Naive thymus-derived CD4-positive, alpha-beta T cell (primary cell): ENCODE measurements at regions of chrX and their contacts with region 1.

Region 1: GRCh38 chrX:107826238-107827029 is 768 bp downstream of the MID2 start:
- DNase-seq: peak in 8 of 9 donors; percentile 9 to 53 (median 46)
- ATAC-seq: peak; percentile 77
- H3K4me3 ChIP-seq: peak overlapping the region; percentile 57
- H3K4me3 Mint-ChIP-seq: peak overlapping the region; percentile 78 to 92 (median 89)
- H3K27ac ChIP-seq: peak overlapping the region; percentile 80
- H3K27ac Mint-ChIP-seq: peak overlapping the region; percentile 44 to 95 (median 92)
- H3K4me1 ChIP-seq: peaks cover 0 to 7% of the 10 kb centered on the region in 2 donors
- H3K4me1 Mint-ChIP-seq: peaks cover 11 to 65% (median 43%) of the 10 kb centered on the region in 7 donors
- H3K27me3 ChIP-seq: no peaks in the 10 kb centered on the region
- H3K27me3 Mint-ChIP-seq: peaks cover 0 to 20% (median 0%) of the 10 kb centered on the region in 5 donors

Region 2: GRCh38 chrX:107654872-107655761 is 171.3 kb before region 1 on chrX:
- CTCF ChIA-PET with region 1: no interaction called
- POLR2A ChIA-PET with region 1: no interaction called
- intact Hi-C with region 1: loop called in 1 of 2 experiments (anchors 5 kb)
- DNase-seq: peak; percentile 49 to 76 (median 60)
- ATAC-seq: peak; percentile 94
- H3K4me3 ChIP-seq: no peak overlapping the region
- H3K4me3 Mint-ChIP-seq: no peak overlapping the region
- H3K27ac ChIP-seq: no peak overlapping the region
- H3K27ac Mint-ChIP-seq: peak overlapping the region in 7 of 9 donors; percentile 1 to 89 (median 72)
- H3K4me1 ChIP-seq: peaks cover 0 to 6% of the 10 kb centered on the region in 2 donors
- H3K4me1 Mint-ChIP-seq: peaks cover 6 to 30% (median 18%) of the 10 kb centered on the region in 7 donors
- H3K27me3 ChIP-seq: no peaks in the 10 kb centered on the region
- H3K27me3 Mint-ChIP-seq: no peaks in the 10 kb centered on the region

Region 3: DNA sequence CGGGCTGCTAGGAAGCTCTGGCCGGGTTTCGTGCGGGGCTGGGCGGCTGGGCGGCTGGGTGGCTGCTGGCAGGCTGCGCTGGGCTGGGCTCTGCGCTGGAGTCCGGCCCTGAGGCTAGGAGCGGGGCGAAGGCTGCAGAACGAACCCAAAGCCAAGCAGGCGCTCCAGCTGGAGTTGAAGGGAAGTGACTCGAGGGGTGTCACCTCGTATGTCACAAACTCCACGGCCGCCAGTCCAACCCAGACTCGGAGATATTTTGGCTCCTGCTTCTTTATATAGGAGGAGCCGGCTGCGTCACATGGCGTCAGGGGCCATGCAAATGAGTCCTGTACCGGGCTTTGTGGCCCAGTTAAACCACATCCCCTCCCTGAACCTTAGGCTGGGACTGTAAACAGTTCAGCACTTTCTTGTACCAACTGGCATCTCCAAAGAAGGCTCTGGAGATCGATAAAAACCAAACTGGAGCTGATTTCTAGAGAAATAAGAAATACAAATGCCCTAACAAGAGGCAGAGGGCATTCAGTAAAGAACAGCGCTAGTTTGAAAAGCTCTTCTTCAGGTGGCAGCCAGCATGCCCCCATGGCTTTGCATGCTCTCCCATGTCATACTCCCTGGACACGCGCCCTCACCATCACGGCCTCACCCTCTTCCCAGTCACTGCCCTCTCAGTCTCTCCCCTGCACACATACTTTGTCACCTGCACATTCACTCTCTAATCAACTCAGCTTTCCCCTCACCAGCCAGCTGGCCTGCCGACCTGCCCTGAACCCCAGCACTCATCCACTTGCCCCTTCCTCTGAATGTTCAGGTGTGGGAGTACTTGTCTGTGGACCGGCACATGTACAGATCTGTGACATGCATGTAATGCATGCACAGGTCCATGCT is 109.4 kb before region 1 on chrX:
- CTCF ChIA-PET with region 1: no interaction called
- POLR2A ChIA-PET with region 1: no interaction called
- intact Hi-C with region 1: loop called in 1 of 2 experiments (anchors 1 kb)
- DNase-seq: peak; percentile 77 to 96 (median 91)
- ATAC-seq: peak; percentile 68
- H3K4me3 ChIP-seq: peak overlapping the region; percentile 97
- H3K4me3 Mint-ChIP-seq: peak overlapping the region; percentile 87 to 96 (median 92)
- H3K27ac ChIP-seq: peak overlapping the region; percentile 100
- H3K27ac Mint-ChIP-seq: peak overlapping the region; percentile 94 to 100 (median 98)
- H3K4me1 ChIP-seq: peaks cover 33 to 41% of the 10 kb centered on the region in 2 donors
- H3K4me1 Mint-ChIP-seq: peaks cover 12 to 71% (median 54%) of the 10 kb centered on the region in 7 donors
- H3K27me3 ChIP-seq: no peaks in the 10 kb centered on the region
- H3K27me3 Mint-ChIP-seq: no peaks in the 10 kb centered on the region

Region 4: DNA sequence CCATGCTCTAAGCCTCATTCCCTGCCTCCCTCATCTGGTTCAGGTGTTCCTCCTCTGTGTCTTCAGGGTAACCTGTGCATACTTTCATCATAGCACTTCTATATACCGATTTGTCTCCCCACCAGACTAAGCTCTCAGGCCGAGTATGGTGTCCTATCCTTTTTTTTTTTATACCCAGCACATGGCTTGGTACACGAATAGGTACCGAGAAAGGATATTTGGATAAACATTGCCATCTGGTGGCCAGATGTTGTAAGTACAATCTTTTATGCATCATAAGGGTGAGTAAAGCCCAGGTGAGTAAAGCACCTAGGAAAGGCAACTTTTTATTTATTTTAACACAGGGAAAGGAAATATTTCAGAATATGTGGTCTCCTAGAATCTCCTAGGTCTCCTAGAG is 67.6 kb after region 1 on chrX:
- CTCF ChIA-PET with region 1: no interaction called
- POLR2A ChIA-PET with region 1: no interaction called
- intact Hi-C with region 1: loop called in 1 of 2 experiments (anchors 5 kb)
- DNase-seq: peak in 7 of 9 donors; percentile 30 to 68 (median 61)
- ATAC-seq: peak; percentile 72
- H3K4me3 ChIP-seq: no peak overlapping the region
- H3K4me3 Mint-ChIP-seq: no peak overlapping the region
- H3K27ac ChIP-seq: no peak overlapping the region
- H3K27ac Mint-ChIP-seq: peak overlapping the region in 3 of 9 donors; percentile 20 to 90 (median 52)
- H3K4me1 ChIP-seq: no peaks in the 10 kb centered on the region
- H3K4me1 Mint-ChIP-seq: peaks cover 0 to 8% (median 0%) of the 10 kb centered on the region in 7 donors
- H3K27me3 ChIP-seq: no peaks in the 10 kb centered on the region
- H3K27me3 Mint-ChIP-seq: no peaks in the 10 kb centered on the region

Region 5: GRCh38 chrX:108091266-108091877 is 264.9 kb after region 1 on chrX and contains the starts of genes ATG4A and PSMD10:
- CTCF ChIA-PET with region 1: no interaction called
- POLR2A ChIA-PET with region 1: no interaction called
- intact Hi-C with region 1: loop called (anchors 2 to 5 kb)
- DNase-seq: peak; percentile 65 to 91 (median 85)
- ATAC-seq: peak; percentile 97
- H3K4me3 ChIP-seq: peak within 1 kb of the TSS; percentile 85
- H3K4me3 Mint-ChIP-seq: no peak within 1 kb of the TSS
- H3K27ac ChIP-seq: peak within 1 kb of the TSS; percentile 88
- H3K27ac Mint-ChIP-seq: no peak within 1 kb of the TSS
- H3K4me1 ChIP-seq: no peaks in the 10 kb centered on the region
- H3K4me1 Mint-ChIP-seq: peaks cover 0 to 28% (median 15%) of the 10 kb centered on the region in 7 donors
- H3K27me3 ChIP-seq: no peaks in the 10 kb centered on the region
- H3K27me3 Mint-ChIP-seq: no peaks in the 10 kb centered on the region
- total RNA-seq, gene ATG4A: 6.7 to 11.4 (median 7.5) TPM
- total RNA-seq, gene PSMD10: 17.6 to 36.8 (median 22.1) TPM